Activated CD4-positive, alpha-beta T cell treated with anti-CD3 and anti-CD28 coated beads, Interleukin-2, amount 10 ng/mL, durations not matched to agents 24 days and 14 days (primary cell): ENCODE measurements at regions of chr12 and their contacts with region 1.

Region 1: GRCh38 chr12:57803319-57803893 is 15.1 kb downstream of the AVIL start:
- DNase-seq: peak; percentile 79
- H3K4me3 Mint-ChIP-seq: no peak overlapping the region
- H3K27ac Mint-ChIP-seq: no peak overlapping the region
- H3K4me1 Mint-ChIP-seq: peaks cover 2% of the 10 kb centered on the region
- H3K27me3 Mint-ChIP-seq: no peaks in the 10 kb centered on the region

Region 2: DNA sequence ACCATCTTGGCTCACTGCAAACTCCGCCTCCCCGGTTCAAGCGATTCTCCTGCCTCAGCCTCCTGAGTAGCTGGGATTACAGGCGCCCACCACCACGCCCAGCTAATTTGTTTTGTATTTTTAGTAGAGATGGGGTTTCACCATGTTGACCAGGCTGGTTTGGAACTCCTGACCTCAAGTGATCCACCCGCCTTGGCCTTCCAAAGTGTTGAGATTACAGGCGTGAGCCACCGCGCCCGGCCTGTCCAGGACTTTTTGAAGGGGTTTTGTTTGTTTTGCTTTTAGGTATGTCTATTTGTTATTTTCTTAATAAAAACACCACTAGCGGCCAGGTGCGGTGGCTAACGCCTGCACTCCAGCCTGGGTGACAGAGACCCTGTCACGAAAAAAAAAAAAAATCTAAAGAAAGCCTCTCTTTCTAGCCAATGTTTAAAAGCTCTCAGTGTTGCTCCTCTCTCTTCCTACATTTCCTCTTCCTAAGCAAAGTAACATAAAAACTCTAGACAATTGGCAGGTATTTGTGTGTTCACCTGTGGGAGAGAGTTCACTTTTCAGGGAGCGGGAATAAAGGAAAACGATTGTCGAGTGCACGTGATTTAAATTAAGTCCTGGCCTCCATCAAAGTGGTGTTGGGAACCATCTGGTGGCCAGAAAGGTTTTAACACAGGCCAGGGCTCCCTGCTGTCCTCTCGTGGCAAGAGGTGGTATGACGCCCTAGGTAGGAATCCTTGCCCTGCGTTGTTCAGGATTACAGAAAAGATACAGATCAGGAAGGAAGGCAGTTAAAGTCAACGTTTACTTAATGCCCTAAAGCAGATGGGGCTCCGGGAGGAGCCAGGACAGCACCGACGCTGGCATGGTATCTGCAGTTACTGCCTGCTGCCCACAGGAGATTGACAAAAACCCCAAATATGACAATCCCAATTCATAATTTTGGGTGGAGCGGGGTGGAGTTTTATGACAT is 101.7 kb after region 1 on chr12:
- intact Hi-C with region 1: loop called (anchors 1 kb)
- DNase-seq: peak; percentile 95
- H3K4me3 Mint-ChIP-seq: peak overlapping the region; percentile 53
- H3K27ac Mint-ChIP-seq: peak overlapping the region; percentile 32
- H3K4me1 Mint-ChIP-seq: peaks cover 6% of the 10 kb centered on the region
- H3K27me3 Mint-ChIP-seq: peaks cover 35% of the 10 kb centered on the region

Region 3: GRCh38 chr12:57929092-57929830 is 125.9 kb after region 1 on chr12:
- intact Hi-C with region 1: no loop called
- DNase-seq: no peak
- H3K4me3 Mint-ChIP-seq: no peak overlapping the region
- H3K27ac Mint-ChIP-seq: no peak overlapping the region
- H3K4me1 Mint-ChIP-seq: peaks cover 4% of the 10 kb centered on the region
- H3K27me3 Mint-ChIP-seq: no peaks in the 10 kb centered on the region